ENCODE measurements at regions of chr11 and their contacts with region 1.

Region 1: DNA sequence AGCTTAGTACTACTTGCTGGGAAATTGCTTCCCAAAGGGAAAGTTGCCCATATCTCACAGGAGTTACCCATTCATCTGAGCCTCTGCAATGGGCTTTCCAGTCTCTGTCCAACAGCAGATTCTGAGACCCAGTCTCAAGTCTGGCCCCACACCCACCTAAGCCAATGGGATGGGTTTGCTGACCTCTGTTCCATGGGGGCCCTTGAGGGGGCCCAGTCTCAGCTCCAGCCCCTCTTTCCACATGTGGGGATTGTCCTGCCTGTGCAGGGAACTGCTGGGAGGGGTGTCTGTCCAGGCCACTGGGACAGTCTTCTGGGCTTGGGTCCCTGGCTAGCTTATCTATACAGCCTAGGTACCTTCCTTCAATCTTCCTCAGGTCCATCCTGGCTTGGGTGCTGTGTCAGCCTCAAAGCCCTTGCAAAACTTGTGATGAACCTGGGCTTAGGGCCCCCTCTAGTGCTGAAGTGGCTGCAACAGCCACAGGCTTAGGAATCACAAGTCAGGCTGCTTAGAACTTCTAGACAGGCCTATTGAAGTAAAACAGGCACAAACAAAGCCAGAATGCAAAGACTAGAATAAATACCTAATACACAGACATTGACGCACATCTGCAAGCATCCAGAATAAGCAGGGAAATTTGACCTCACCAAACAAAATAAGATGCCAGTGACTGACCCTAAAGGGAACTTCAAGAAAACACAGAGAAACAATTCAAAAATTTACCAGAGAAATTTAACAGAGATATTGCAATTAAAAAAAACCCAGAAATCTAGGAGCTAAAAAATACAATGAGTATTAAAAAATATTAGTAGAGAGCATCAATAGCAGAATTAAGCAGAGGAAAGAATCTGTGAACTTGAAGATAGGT is 11.7 kb upstream of the PATL1 start:
- DNase-seq: peak; percentile 77
- ATAC-seq: peak; percentile 100
- H3K4me3 ChIP-seq: no peak overlapping the region
- H3K27ac ChIP-seq: no peak overlapping the region
- H3K4me1 ChIP-seq: 0 out of 4 replicates have a peak, but pooled peaks cover 0 to 2% of the 10 kb centered on the region in 2 experiments
- H3K27me3 ChIP-seq: no peaks in the 10 kb centered on the region
- CTCF ChIP-seq: peak; percentile 83 to 92 (median 89)
- POLR2A ChIP-seq: no peak
- RAD21 ChIP-seq: peak; percentile 92

Region 2: DNA sequence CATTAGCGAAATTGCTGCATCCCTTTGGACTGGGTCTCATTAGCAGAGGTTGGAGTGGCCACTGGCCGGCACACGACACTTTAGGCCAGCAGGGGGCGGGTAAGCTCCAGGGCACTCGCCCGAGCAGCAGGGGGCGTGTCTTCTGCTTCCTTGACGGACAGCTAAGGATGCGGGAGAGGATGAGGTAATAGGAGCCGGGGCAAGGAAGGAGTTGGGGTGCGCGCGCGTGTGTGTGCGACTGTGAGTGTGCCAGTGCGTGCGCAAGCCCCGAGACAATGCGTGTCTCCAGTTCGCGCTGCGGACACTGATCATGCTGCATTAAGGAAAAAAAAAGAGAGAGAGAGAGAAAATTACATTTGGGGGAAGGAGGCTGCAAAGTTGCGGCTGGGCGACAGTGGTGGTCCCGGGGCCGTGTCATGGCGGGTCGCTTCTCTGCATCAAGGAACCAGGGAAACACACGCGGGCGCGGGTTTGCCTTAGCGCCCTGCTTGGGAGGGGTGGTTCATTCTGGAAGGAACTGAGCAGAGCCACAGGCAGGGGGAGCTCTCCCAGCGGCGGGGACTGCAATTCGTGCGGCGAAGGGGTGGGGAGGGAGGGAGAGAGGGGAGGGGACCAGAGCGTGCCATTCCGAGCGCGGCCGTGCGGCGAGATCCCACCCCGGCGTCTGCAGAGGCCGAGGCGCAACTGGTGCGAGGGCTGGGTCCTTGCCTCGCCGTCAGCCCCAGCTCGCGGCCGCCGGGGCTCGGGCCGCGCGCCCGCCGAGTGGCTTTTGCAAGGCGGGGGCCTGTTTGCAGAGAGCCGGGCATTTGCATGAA is 508.8 kb before region 1 on chr11 and contains the start of gene DTX4:
- CTCF ChIA-PET with region 1: no interaction called
- POLR2A ChIA-PET with region 1: no interaction called
- RAD21 ChIA-PET with region 1: interaction called in 1 of 2 experiments, 3 read pairs
- intact Hi-C with region 1: loop called (anchors 1 kb)
- DNase-seq: peak; percentile 84
- ATAC-seq: peak; percentile 89
- H3K4me3 ChIP-seq: peak within 1 kb of the TSS; percentile 44 to 59
- H3K27ac ChIP-seq: no peak within 1 kb of the TSS; the same call in 1 of the 2 replicates
- H3K4me1 ChIP-seq: peaks cover 14 to 39% of the 10 kb centered on the region in 2 experiments; a peak in 3 of 4 replicates
- H3K27me3 ChIP-seq: no peaks in the 10 kb centered on the region
- CTCF ChIP-seq: peak; percentile 78 to 94 (median 83)
- POLR2A ChIP-seq: no peak
- RAD21 ChIP-seq: peak; percentile 94
- total RNA-seq, gene DTX4: 7.6 TPM

Region 3: GRCh38 chr11:59283825-59284772 is 396.4 kb before region 1 on chr11:
- CTCF ChIA-PET with region 1: no interaction called
- POLR2A ChIA-PET with region 1: no interaction called
- RAD21 ChIA-PET with region 1: no interaction called
- intact Hi-C with region 1: loop called (anchors 5 kb)
- DNase-seq: peak; percentile 29
- ATAC-seq: peak; percentile 78
- H3K4me3 ChIP-seq: no peak overlapping the region
- H3K27ac ChIP-seq: no peak overlapping the region
- H3K4me1 ChIP-seq: no peaks in the 10 kb centered on the region
- H3K27me3 ChIP-seq: peaks cover 17% of the 10 kb centered on the region; the same call in 1 of the 2 replicates
- CTCF ChIP-seq: peak; percentile 62 to 80 (median 78); a peak in 5 of 6 replicates
- POLR2A ChIP-seq: no peak
- RAD21 ChIP-seq: peak; percentile 65

Region 4: DNA sequence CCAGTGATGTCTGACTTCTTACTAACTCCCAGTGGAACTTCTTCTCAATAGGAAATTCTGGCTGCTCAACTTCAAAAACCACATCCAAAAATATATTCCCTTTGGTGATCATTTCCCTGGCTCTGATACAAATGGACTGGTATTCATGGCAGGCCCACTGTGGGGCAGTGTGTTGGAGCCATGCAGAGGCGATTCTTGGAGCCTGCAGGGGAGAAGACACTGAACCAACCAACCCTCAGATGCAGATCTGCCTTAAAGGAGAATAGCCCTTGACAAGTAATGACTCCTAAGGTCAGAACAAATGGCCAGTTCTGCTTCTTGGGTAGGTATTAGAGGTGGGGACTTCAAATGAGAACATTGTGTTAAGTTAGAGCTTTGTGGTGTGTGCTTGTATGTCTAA is 157.0 kb before region 1 on chr11:
- CTCF ChIA-PET with region 1: no interaction called
- POLR2A ChIA-PET with region 1: no interaction called
- RAD21 ChIA-PET with region 1: no interaction called
- intact Hi-C with region 1: loop called (anchors 5 kb)
- DNase-seq: peak; percentile 19
- ATAC-seq: peak; percentile 95
- H3K4me3 ChIP-seq: no peak overlapping the region
- H3K27ac ChIP-seq: no peak overlapping the region
- H3K4me1 ChIP-seq: no peaks in the 10 kb centered on the region
- H3K27me3 ChIP-seq: no peaks in the 10 kb centered on the region
- CTCF ChIP-seq: peak in 2 of 3 experiments; percentile 41; a peak in 5 of 6 replicates
- POLR2A ChIP-seq: no peak
- RAD21 ChIP-seq: peak; percentile 17; the same call in 1 of the 2 replicates

Region 5: DNA sequence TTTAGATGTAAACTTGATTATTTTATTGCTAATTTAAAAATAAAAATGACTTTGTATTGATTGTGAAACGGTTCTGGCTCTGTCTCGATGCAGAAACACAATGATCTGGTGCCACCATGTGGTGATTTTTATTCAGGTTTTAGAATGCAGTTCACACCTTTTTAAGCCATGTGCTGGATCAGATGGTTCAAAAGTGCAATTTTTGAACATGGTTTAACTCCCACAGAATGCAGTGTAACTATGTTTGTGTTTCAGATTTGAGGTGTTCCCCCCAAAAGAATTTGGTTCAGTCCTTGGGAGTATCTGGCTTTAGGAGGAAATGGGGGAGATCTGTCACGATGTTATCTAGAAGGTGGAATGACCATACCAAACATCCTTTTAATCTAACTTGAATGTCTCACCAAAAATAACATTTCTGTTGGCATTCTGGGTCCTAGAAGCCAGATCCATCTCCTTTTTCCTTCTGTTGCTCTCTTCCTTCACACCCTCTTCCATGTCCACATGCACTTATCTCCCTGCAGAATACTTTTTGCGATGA is 122.2 kb after region 1 on chr11:
- CTCF ChIA-PET with region 1: interaction called, 3 read pairs
- POLR2A ChIA-PET with region 1: no interaction called
- RAD21 ChIA-PET with region 1: no interaction called
- intact Hi-C with region 1: loop called (anchors 10 kb)
- DNase-seq: peak; percentile 46
- ATAC-seq: peak; percentile 67
- H3K4me3 ChIP-seq: no peak overlapping the region
- H3K27ac ChIP-seq: no peak overlapping the region
- H3K4me1 ChIP-seq: peaks cover 0 to 7% of the 10 kb centered on the region in 2 experiments; a peak in 1 of 4 replicates
- H3K27me3 ChIP-seq: no peaks in the 10 kb centered on the region
- CTCF ChIP-seq: peak; percentile 41 to 95 (median 66); a peak in 5 of 6 replicates
- POLR2A ChIP-seq: no peak
- RAD21 ChIP-seq: peak; percentile 94